HCT116 (cell line): ENCODE measurements at regions of chr3 and their contacts with region 1.

Region 1: DNA sequence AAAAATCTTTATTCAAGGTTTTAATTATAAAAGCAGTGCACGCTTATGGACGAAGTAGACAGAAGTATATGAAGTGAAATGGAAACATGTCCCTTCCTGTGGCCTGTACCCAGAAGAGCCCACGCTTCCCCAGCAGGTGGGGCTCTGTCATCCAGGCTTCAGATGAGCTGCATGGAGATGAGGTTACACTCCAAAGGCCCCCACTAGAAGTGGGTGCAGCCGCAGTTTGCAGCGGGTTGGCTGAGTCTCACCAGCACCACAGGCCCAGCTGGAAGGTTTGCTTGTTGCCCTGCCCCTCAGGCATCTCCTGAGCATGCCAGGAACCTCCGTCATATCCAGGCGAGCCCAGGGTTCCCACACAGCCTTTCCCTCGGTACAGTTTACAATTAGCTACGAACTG is 33.1 kb downstream of the PRR20G start:
- DNase-seq: peak; percentile 15
- ATAC-seq: peak; percentile 91
- H3K4me3 ChIP-seq: no peak overlapping the region
- H3K27ac ChIP-seq: no peak overlapping the region
- H3K4me1 ChIP-seq: no peaks in the 10 kb centered on the region
- H3K27me3 ChIP-seq: no peaks in the 10 kb centered on the region
- CTCF ChIP-seq: peak; percentile 49 to 65 (median 64); a peak in 4 of 6 replicates
- POLR2A ChIP-seq: no peak
- RAD21 ChIP-seq: peak; percentile 72

Region 2: GRCh38 chr3:127304121-127304744 is 49.5 kb after region 1 on chr3:
- CTCF ChIA-PET with region 1: interaction called, 11 read pairs
- POLR2A ChIA-PET with region 1: no interaction called
- RAD21 ChIA-PET with region 1: no interaction called
- intact Hi-C with region 1: no loop called
- DNase-seq: peak; percentile 92
- ATAC-seq: peak; percentile 97
- H3K4me3 ChIP-seq: peak overlapping the region; percentile 3 to 43
- H3K27ac ChIP-seq: peak overlapping the region; percentile 31; the same call in 1 of the 2 replicates
- H3K4me1 ChIP-seq: peaks cover 10 to 16% of the 10 kb centered on the region in 2 experiments
- H3K27me3 ChIP-seq: no peaks in the 10 kb centered on the region
- CTCF ChIP-seq: peak; percentile 28 to 45 (median 35); a peak in 4 of 6 replicates
- POLR2A ChIP-seq: no peak
- RAD21 ChIP-seq: peak; percentile 45

Region 3: DNA sequence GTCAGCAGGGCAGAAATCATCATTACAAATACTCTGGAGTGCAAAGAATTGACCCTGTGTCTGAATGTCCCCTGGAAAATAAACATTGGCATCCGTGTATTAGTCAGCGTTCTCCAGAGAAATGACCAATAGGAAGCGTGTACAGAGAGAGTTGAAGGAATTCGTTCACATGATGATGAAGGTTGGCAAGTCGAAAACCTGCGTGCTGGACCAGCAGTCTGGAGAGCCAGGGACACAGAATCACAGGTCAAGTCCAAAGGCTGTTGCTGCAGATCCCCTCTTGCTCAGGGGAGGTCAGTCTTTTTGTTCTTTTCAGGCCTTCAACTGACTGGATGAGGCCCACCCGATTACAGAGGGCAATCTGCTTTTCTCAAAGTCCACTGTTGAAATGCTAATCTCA is 1822.5 kb after region 1 on chr3:
- CTCF ChIA-PET with region 1: no interaction called
- POLR2A ChIA-PET with region 1: no interaction called
- RAD21 ChIA-PET with region 1: no interaction called
- intact Hi-C with region 1: no loop called
- DNase-seq: no peak
- ATAC-seq: no peak
- H3K4me3 ChIP-seq: no peak overlapping the region
- H3K27ac ChIP-seq: no peak overlapping the region
- H3K4me1 ChIP-seq: no peaks in the 10 kb centered on the region
- H3K27me3 ChIP-seq: no peaks in the 10 kb centered on the region
- CTCF ChIP-seq: no peak
- POLR2A ChIP-seq: no peak
- RAD21 ChIP-seq: no peak